Left colon (tissue), 2 donors: ENCODE measurements at regions of chr14 and their contacts with region 1.

Region 1: GRCh38 chr14:77862154-77862786 is 62.4 kb downstream of the ADCK1 start:
- DNase-seq: peak; percentile 43 to 78
- ATAC-seq: peak; percentile 67

Region 2: GRCh38 chr14:78566026-78566858 is 704.0 kb after region 1 on chr14:
- intact Hi-C with region 1: loop called in 1 of 2 experiments (anchors 10 kb)
- DNase-seq: peak; percentile 26 to 75
- ATAC-seq: peak; percentile 86